CD4-positive, alpha-beta memory T cell (primary cell): ENCODE measurements at regions of chr5 and their contacts with region 1.

Region 1: DNA sequence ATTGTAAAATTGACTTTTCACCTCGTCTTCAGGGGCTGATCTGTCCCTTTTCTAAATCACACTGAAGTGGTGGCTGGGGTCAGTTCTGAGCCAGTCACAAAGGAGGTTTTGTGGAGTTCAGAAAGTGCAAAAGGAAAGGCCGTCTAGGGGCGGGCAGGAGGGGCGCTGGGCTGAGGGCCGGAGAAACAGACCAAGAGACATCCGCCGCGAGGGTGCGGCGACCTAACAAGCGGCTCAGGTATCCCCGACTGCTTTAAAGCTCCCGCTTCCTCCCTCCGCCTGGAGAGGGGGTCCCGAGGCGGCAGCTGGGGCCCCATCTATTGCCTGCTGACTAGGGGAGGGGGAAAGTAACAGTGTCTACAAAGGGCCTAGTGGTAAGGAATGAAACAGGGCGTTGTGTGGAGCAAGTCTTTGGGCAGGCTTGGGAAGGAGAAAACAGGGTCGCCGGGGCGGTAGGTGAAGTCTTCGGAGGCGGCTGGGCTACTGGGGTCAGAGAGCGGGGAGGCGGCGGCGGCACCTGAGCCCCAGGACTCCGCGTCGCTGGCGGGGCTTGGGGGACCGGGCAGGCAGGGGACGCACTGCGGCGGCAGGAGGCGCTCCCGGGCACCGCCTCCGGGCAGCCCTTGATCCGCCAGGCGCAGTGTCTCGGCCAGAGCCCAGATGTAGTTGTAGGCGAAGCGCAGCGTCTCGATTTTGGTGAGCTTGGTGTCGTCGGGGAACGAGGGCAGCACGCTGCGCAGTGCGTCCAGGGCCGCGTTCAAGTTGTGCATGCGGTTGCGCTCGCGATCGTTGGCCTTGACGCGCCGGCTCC is 950 bp downstream of the NEUROG1 start:
- DNase-seq: no peak
- H3K4me3 ChIP-seq: no peak overlapping the region
- H3K4me3 Mint-ChIP-seq: peak overlapping the region in 4 of 8 donors; percentile 39 to 72 (median 54)
- H3K27ac ChIP-seq: no peak overlapping the region
- H3K27ac Mint-ChIP-seq: peak overlapping the region in 1 of 7 donors; percentile 50
- H3K4me1 ChIP-seq: no peaks in the 10 kb centered on the region
- H3K4me1 Mint-ChIP-seq: peaks cover 0 to 8% (median 5%) of the 10 kb centered on the region in 4 donors
- H3K27me3 ChIP-seq: peaks cover 23% of the 10 kb centered on the region
- H3K27me3 Mint-ChIP-seq: peaks cover 69 to 74% of the 10 kb centered on the region in 2 donors

Region 2: GRCh38 chr5:135551593-135552447 is 17.0 kb after region 1 on chr5:
- CTCF ChIA-PET with region 1: interaction called, 10 read pairs
- POLR2A ChIA-PET with region 1: no interaction called
- intact Hi-C with region 1: no loop called
- DNase-seq: peak; percentile 33 to 48 (median 40)
- H3K4me3 ChIP-seq: no peak overlapping the region
- H3K4me3 Mint-ChIP-seq: no peak overlapping the region
- H3K27ac ChIP-seq: no peak overlapping the region
- H3K27ac Mint-ChIP-seq: no peak overlapping the region
- H3K4me1 ChIP-seq: no peaks in the 10 kb centered on the region
- H3K4me1 Mint-ChIP-seq: peaks cover 0 to 2% (median 1%) of the 10 kb centered on the region in 4 donors
- H3K27me3 ChIP-seq: peaks cover 5% of the 10 kb centered on the region
- H3K27me3 Mint-ChIP-seq: peaks cover 22 to 45% of the 10 kb centered on the region in 2 donors